Endothelial cell of umbilical vein (primary cell): ENCODE measurements at regions of chr17 and their contacts with region 1.

Region 1: DNA sequence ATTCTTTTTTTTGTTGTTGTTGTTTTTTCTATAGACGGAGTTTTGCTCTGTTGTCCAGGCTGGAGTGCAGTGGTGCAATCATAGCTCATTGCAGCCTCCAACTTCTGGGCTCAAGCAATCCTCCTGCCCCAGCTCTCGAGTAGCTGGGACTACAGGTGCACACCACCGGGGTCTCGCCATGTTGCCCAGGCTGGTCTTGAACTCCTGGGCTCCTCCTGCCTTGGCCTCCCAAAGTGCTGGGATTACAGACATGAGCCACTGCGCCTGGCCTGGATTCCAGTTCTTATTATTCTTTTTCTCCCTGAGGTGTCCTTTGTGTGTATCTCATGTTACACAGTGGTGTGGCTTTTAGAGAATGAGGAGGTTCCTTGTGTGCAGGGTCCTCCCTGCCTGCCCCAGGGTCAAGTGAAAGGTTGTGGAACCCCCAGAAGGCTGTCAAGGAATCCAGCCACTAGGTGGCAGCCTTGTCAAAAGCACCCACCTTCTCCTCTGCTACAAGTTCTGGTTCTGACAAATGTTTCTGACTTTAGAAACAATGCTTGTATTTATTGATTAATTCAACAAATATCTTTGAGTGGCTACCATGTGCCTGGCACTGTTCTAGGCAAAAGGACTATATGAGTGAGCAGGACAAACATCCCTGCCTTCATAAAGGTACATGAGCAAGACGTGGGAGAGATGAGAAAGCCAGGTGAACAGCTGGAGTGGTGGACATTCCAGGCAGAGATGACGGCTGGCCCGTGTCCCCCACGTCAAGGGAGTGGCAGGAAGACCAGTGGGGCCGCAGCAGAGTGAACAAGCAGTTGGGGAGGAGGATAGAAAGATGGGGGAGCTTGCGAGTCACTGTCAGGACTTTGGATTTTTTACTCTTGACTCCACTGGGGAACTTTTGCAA is 112.4 kb downstream of the SPECC1 start:
- DNase-seq: peak; percentile 52
- H3K4me3 ChIP-seq: no peak overlapping the region
- H3K27ac ChIP-seq: no peak overlapping the region
- H3K4me1 ChIP-seq: no peaks in the 10 kb centered on the region
- H3K27me3 ChIP-seq: no peaks in the 10 kb centered on the region
- CTCF ChIP-seq: peak; percentile 73 to 82
- POLR2A ChIP-seq: no peak

Region 2: DNA sequence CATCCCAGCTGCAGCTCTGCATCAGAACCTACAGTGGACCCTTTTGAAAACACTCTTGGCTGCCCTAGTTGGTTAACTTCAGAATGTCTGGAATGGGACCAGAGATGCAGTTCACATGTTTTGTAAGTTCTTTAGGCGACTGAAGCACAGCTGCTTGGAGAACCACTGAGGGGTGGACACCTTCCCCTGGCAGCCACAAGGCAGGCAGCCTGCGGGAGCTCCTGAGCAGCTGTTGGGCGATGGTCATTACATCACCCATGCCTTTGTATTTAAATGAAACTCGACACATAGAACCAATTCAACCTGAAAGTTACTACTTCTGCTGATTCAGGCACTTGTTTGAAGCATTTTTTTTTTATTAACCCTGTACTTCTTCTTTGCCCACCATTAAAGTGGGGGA is 194.2 kb after region 1 on chr17:
- CTCF ChIA-PET with region 1: interaction called, 30 read pairs
- POLR2A ChIA-PET with region 1: no interaction called
- dilution Hi-C with region 1: no loop called
- intact Hi-C with region 1: no loop called
- DNase-seq: no peak
- H3K4me3 ChIP-seq: no peak overlapping the region
- H3K27ac ChIP-seq: no peak overlapping the region
- H3K4me1 ChIP-seq: no peaks in the 10 kb centered on the region
- H3K27me3 ChIP-seq: no peaks in the 10 kb centered on the region
- CTCF ChIP-seq: no peak
- POLR2A ChIP-seq: no peak